ENCODE measurements at regions of chr9 and their contacts with region 1.

Region 1: GRCh38 chr9:78369639-78370219 is 72.8 kb downstream of the PSAT1 start:
- DNase-seq: peak; percentile 81
- H3K4me3 Mint-ChIP-seq: no peak overlapping the region
- H3K27ac Mint-ChIP-seq: no peak overlapping the region
- H3K4me1 Mint-ChIP-seq: peaks cover 6% of the 10 kb centered on the region
- H3K27me3 Mint-ChIP-seq: peaks cover 11% of the 10 kb centered on the region
- CTCF ChIP-seq: peak; percentile 84

Region 2: DNA sequence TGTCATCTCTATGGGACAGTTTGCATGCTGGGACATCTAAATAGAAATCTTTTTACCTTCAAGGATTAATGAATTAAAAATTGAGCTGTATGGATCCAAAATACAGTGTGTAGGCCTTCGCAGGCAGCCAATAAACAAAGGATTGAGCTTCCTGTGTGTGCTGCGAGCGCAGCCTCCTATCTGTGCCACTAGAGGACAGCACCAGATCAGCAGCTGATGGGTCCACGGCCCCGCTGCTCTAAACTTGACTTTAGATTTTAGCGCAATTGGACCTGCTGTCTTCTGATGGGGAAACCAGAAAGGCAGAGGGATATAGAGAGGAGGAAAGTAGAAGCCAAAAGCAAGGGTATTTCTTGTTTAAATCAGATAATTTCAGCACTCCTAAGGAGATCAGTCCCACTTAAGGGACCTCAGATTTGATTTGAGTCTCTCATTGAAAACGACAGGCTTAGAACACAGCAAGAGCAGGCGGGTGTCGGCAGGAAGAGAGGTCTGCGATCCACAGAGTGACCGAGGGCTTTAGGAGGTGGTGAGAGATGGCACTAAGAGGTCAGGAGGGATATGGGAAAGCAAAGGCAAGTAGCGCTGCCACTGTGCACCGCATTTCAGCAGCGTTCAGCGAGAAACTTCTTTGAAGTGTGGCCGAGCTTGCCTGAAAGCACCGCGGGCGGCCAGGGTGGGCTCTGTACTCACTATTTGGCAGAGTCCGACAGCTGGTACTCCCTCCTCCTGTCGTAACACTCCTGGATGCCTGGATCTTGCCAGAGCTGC is 935.9 kb before region 1 on chr9:
- CTCF ChIA-PET with region 1: no interaction called
- POLR2A ChIA-PET with region 1: no interaction called
- intact Hi-C with region 1: loop called (anchors 10 kb)
- DNase-seq: peak; percentile 61
- H3K4me3 Mint-ChIP-seq: no peak overlapping the region
- H3K27ac Mint-ChIP-seq: no peak overlapping the region
- H3K4me1 Mint-ChIP-seq: peaks cover 4% of the 10 kb centered on the region
- H3K27me3 Mint-ChIP-seq: no peaks in the 10 kb centered on the region
- CTCF ChIP-seq: peak; percentile 98

Region 3: GRCh38 chr9:77987081-77987656 is 382.6 kb before region 1 on chr9:
- CTCF ChIA-PET with region 1: no interaction called
- POLR2A ChIA-PET with region 1: no interaction called
- intact Hi-C with region 1: no loop called
- DNase-seq: no peak
- H3K4me3 Mint-ChIP-seq: no peak overlapping the region
- H3K27ac Mint-ChIP-seq: no peak overlapping the region
- H3K4me1 Mint-ChIP-seq: peaks cover under 1% of the 10 kb centered on the region
- H3K27me3 Mint-ChIP-seq: no peaks in the 10 kb centered on the region
- CTCF ChIP-seq: no peak

Region 4: DNA sequence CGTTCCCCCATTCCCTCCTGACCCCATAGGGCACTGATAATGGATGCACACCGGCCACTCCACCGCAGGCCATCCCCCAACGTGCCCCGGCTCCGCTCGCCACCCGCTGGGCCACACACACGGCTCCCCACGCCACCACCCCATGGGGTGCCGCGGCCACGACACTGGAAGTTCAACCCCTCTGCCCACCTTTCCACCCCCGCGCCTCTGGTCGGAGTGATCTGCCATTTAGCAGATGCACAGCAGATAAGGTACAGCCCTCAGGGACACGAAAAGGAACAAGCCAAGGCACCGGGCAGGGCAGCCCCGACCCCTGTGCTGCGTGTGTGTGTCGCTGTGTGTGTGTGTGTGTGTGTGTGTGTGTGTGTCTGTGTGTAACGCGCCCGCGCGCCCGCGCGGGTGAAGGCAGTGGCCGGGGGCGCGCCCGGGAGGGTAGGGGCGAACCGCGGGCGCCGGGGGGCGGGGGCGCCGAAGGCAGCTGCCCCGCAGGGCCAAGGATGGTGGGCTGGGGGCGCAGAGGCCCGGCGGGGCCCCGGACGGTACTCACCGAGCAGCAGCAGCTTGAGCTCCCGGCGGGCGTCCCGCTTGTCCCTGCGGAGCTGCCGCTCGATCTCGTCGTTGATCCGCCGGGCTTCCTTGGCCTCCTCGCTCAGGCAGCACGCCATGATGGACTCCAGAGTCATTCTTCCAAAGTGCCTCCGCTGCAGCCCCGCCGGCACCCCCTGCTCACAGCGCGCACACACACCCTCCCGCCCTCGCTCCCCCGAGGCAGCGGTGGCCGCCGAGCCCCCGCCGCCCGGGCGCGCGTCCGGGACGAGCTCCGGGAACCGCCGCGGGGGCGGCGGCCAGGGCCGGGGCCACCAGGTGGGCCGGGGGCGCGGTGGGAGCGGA is 338.9 kb before region 1 on chr9:
- CTCF ChIA-PET with region 1: no interaction called
- POLR2A ChIA-PET with region 1: no interaction called
- intact Hi-C with region 1: no loop called
- DNase-seq: peak; percentile 27
- H3K4me3 Mint-ChIP-seq: peak overlapping the region; percentile 87
- H3K27ac Mint-ChIP-seq: peak overlapping the region; percentile 80
- H3K4me1 Mint-ChIP-seq: peaks cover 43% of the 10 kb centered on the region
- H3K27me3 Mint-ChIP-seq: no peaks in the 10 kb centered on the region
- CTCF ChIP-seq: no peak

Region 5: DNA sequence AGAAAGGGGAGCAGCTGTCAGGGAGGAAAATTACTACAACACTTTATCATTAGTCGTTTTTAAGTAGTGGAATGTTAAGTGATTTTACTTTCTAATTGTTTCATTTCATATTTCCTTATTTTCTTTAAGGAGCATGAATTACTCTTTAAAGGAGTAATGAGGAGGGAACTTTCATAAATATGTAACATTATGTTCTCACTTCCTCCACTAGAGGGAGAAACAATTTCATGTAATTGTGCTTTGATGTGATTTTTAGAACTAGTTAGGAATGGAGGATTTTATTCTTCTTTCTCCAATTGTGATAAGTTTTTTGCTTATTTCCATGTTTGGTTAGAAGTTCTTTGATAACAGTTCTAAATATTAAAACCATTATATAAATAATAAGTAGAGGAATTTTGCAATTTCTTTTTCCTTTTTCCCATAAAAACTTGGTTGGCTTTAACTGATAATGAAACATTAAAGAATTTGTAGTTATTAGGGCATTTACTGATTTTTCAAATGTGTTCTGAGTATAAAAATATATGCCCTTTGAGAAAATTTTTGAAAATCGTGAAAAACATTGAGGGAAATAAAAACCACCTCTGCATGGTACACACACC is 108.2 kb before region 1 on chr9:
- CTCF ChIA-PET with region 1: interaction called, 60 read pairs
- POLR2A ChIA-PET with region 1: interaction called, 4 read pairs
- intact Hi-C with region 1: loop called (anchors 1 kb)
- DNase-seq: peak; percentile 45
- H3K4me3 Mint-ChIP-seq: no peak overlapping the region
- H3K27ac Mint-ChIP-seq: no peak overlapping the region
- H3K4me1 Mint-ChIP-seq: no peaks in the 10 kb centered on the region
- H3K27me3 Mint-ChIP-seq: no peaks in the 10 kb centered on the region
- CTCF ChIP-seq: peak; percentile 61

Region 6: DNA sequence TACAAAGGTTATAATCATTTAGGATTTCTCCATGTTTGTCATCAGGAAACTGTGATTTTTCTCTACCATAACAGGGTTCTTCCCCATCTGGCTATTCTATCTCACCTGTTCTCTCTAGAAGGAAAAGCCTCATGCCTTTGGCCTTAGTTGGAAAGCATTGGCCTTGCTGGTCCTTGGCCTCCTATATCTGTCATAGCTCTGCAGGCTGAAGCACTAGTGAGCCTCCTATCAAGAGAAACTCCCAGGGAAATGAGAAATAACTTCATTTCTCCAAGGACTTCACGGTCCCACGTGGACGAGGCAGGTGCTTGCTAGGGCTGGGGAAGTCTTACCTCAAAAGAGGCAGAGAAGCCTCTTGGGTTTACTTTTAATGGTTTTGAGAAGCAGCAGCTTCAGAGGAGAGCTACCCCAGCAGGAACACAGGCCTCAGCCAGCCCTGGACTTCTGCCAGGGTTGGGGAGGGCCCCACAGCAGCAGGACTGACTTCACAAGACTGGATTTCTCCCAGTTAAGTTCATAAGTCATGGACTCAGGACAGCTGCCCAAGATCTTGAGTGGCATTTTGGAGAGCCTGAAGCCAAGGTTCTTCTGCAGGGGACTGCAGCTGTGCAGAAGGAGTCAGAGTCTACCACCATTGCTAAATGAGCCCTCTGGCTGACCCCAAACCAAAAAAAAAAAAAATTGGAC is 88.6 kb before region 1 on chr9:
- CTCF ChIA-PET with region 1: interaction called, 14 read pairs
- POLR2A ChIA-PET with region 1: no interaction called
- intact Hi-C with region 1: no loop called
- DNase-seq: peak; percentile 62
- H3K4me3 Mint-ChIP-seq: no peak overlapping the region
- H3K27ac Mint-ChIP-seq: peak overlapping the region; percentile 49
- H3K4me1 Mint-ChIP-seq: peaks cover 20% of the 10 kb centered on the region
- H3K27me3 Mint-ChIP-seq: no peaks in the 10 kb centered on the region
- CTCF ChIP-seq: no peak

Region 7: DNA sequence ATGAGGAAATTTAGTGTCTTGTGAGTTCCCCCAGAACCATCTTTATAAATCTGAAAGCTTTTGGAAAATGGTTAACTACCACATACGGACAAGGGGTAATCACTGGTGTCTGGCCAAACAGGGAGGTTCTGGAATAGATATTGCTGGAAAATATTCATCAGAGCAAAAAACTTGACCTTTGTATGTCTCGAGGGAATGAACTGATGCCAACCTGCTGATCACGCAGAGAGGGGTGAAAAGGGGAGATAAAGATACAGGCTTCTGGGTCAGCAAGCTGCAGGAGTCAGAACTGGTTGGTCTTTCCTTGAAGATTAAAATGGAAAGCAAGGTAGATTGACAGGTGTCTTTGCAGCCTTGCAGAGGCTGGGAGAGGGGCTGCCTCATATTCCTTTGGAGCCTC is 37.3 kb before region 1 on chr9:
- CTCF ChIA-PET with region 1: interaction called, 10 read pairs
- POLR2A ChIA-PET with region 1: no interaction called
- intact Hi-C with region 1: no loop called
- DNase-seq: no peak
- H3K4me3 Mint-ChIP-seq: no peak overlapping the region
- H3K27ac Mint-ChIP-seq: no peak overlapping the region
- H3K4me1 Mint-ChIP-seq: no peaks in the 10 kb centered on the region
- H3K27me3 Mint-ChIP-seq: no peaks in the 10 kb centered on the region
- CTCF ChIP-seq: no peak

Region 8: DNA sequence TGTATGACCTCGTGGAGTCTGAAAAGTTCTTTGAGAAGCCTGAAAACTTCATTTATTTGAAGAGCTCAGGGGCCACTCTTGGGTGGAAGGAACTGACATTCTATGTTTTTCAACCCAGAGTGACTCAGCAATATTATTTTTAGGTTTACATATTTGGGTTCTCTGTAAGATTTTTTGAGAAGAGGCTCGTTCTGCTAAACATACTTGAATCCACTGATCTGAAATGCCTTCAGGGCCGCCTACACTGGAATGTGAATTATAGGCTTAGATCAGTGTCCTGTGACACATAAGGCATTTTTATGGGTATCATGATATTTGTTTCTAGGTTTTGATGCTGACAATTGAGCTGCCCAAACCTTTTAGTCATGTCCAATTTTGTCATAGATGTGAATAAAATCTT is 13.4 kb after region 1 on chr9:
- CTCF ChIA-PET with region 1: interaction called, 31 read pairs
- POLR2A ChIA-PET with region 1: no interaction called
- intact Hi-C with region 1: no loop called
- DNase-seq: no peak
- H3K4me3 Mint-ChIP-seq: no peak overlapping the region
- H3K27ac Mint-ChIP-seq: no peak overlapping the region
- H3K4me1 Mint-ChIP-seq: no peaks in the 10 kb centered on the region
- H3K27me3 Mint-ChIP-seq: no peaks in the 10 kb centered on the region
- CTCF ChIP-seq: no peak

Region 9: DNA sequence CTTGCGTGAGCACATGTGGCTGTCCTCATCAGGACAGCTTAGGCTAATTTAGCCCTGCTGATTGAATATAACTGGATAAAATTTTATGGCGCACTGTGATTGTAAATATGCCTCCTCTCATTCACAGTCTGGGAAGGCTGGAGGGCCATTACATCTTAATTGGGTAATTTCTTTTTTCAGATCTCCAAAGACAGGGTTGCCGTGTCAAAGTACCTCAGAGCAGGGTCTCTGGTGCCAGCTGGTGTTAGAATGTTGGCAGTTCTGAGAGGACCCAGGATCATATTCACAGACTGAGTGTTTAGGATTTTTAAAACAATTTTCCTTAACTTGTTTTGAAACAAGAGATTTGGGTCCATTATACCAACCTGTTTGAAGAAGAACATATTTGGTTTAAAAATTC is 746.3 kb after region 1 on chr9:
- CTCF ChIA-PET with region 1: no interaction called
- POLR2A ChIA-PET with region 1: no interaction called
- intact Hi-C with region 1: no loop called
- DNase-seq: no peak
- H3K4me3 Mint-ChIP-seq: no peak overlapping the region
- H3K27ac Mint-ChIP-seq: no peak overlapping the region
- H3K4me1 Mint-ChIP-seq: no peaks in the 10 kb centered on the region
- H3K27me3 Mint-ChIP-seq: no peaks in the 10 kb centered on the region
- CTCF ChIP-seq: no peak

Measured in MCF 10A (cell line).